OCI-LY7 (cell line): ENCODE measurements at regions of chr2 and their contacts with region 1.

Region 1: GRCh38 chr2:165648801-165649200 is 145.2 kb downstream of the GALNT3 start:
- DNase-seq: no peak
- H3K4me3 ChIP-seq: no peak overlapping the region
- H3K27ac ChIP-seq: no peak overlapping the region
- H3K4me1 ChIP-seq: no peaks in the 10 kb centered on the region
- CTCF ChIP-seq: no peak

Region 2: GRCh38 chr2:165660361-165660760 is 11.6 kb after region 1 on chr2:
- CTCF ChIA-PET with region 1: no interaction called
- POLR2A ChIA-PET with region 1: interaction called, 13 read pairs
- intact Hi-C with region 1: no loop called
- DNase-seq: no peak
- H3K4me3 ChIP-seq: no peak overlapping the region
- H3K27ac ChIP-seq: no peak overlapping the region
- H3K4me1 ChIP-seq: no peaks in the 10 kb centered on the region
- CTCF ChIP-seq: no peak